ENCODE measurements at regions of chr6 and their contacts with region 1.

Region 1: GRCh38 chr6:12228447-12229146 is 61.6 kb upstream of the EDN1 start:
- DNase-seq: no peak
- H3K4me3 ChIP-seq: no peak overlapping the region
- H3K27ac ChIP-seq: no peak overlapping the region
- H3K4me1 ChIP-seq: peaks cover 0 to 8% (median 2%) of the 10 kb centered on the region in 4 donors
- H3K27me3 ChIP-seq: no peaks in the 10 kb centered on the region
- CTCF ChIP-seq: no peak
- EP300 ChIP-seq: no peak
- POLR2A ChIP-seq: no peak

Region 2: GRCh38 chr6:11665604-11666326 is 562.8 kb before region 1 on chr6:
- intact Hi-C with region 1: loop called (anchors 10 kb)
- DNase-seq: no peak
- H3K4me3 ChIP-seq: no peak overlapping the region
- H3K27ac ChIP-seq: no peak overlapping the region
- H3K4me1 ChIP-seq: no peaks in the 10 kb centered on the region
- H3K27me3 ChIP-seq: no peaks in the 10 kb centered on the region
- CTCF ChIP-seq: no peak
- EP300 ChIP-seq: no peak
- POLR2A ChIP-seq: no peak

Region 3: GRCh38 chr6:12081771-12082170 is 146.8 kb before region 1 on chr6:
- intact Hi-C with region 1: no loop called
- DNase-seq: no peak
- H3K4me3 ChIP-seq: no peak overlapping the region
- H3K27ac ChIP-seq: no peak overlapping the region
- H3K4me1 ChIP-seq: peaks cover 0 to 29% (median 11%) of the 10 kb centered on the region in 4 donors
- H3K27me3 ChIP-seq: no peaks in the 10 kb centered on the region
- CTCF ChIP-seq: no peak
- EP300 ChIP-seq: no peak
- POLR2A ChIP-seq: no peak

Region 4: GRCh38 chr6:12331956-12332749 is 103.6 kb after region 1 on chr6:
- intact Hi-C with region 1: no loop called
- DNase-seq: peak; percentile 64 to 92
- H3K4me3 ChIP-seq: no peak overlapping the region
- H3K27ac ChIP-seq: peak overlapping the region; percentile 81 to 94 (median 85)
- H3K4me1 ChIP-seq: peaks cover 11 to 53% (median 35%) of the 10 kb centered on the region in 4 donors
- H3K27me3 ChIP-seq: no peaks in the 10 kb centered on the region
- CTCF ChIP-seq: no peak
- EP300 ChIP-seq: no peak
- POLR2A ChIP-seq: no peak